IMR-90 (cell line): ENCODE measurements at regions of chr1 and their contacts with region 1.

Region 1: GRCh38 chr1:53754484-53755312 is 15.7 kb upstream of the GLIS1 start:
- DNase-seq: peak; percentile 77
- ATAC-seq: peak; percentile 91
- H3K4me3 ChIP-seq: no peak overlapping the region
- H3K27ac ChIP-seq: no peak overlapping the region
- H3K4me1 ChIP-seq: no peaks in the 10 kb centered on the region
- H3K27me3 ChIP-seq: peaks cover 3% of the 10 kb centered on the region; the same call in 1 of the 2 replicates
- CTCF ChIP-seq: peak; percentile 84
- POLR2A ChIP-seq: no peak
- RAD21 ChIP-seq: peak; percentile 92

Region 2: DNA sequence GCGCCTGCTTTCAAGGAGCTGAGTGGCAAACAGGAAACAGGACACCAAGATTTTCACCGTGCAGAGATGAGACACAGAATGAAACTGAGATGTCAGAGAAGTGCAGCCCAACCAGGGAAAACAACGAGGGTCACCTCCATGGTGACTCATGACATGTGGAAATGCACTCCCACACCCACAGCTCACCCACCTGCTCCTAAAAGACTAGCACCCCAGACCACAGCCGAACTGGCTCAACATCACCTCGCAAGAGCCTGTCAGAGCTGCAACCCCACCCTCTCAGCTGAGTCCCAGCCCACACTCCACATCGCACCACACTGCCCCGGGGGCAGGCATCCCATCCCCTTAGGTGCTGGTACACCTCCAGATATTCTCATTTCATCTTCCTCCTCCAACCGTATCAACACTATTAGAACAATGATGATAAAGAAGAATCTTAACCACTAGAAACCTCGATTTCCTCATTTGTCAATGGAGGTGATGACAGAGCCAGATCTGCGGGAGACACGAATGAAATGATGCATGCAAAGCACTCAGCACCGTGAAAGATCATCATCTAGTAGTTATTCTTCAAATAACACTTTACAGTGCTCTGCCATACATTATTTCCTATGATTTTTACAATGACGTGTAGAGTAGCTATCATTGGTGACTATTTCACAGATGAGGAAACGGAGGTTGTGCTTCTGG is 192.3 kb before region 1 on chr1:
- CTCF ChIA-PET with region 1: no interaction called
- POLR2A ChIA-PET with region 1: no interaction called
- dilution Hi-C with region 1: no loop called
- in situ Hi-C with region 1: no loop called
- intact Hi-C with region 1: loop called (anchors 5 kb)
- DNase-seq: peak; percentile 30
- ATAC-seq: no peak
- H3K4me3 ChIP-seq: no peak overlapping the region
- H3K27ac ChIP-seq: no peak overlapping the region
- H3K4me1 ChIP-seq: peaks cover 6% of the 10 kb centered on the region; the same call in 1 of the 2 replicates
- H3K27me3 ChIP-seq: no peaks in the 10 kb centered on the region
- CTCF ChIP-seq: no peak
- POLR2A ChIP-seq: no peak
- RAD21 ChIP-seq: no peak

Region 3: GRCh38 chr1:53681977-53682685 is 72.6 kb before region 1 on chr1:
- CTCF ChIA-PET with region 1: no interaction called
- POLR2A ChIA-PET with region 1: no interaction called
- dilution Hi-C with region 1: no loop called
- in situ Hi-C with region 1: no loop called
- intact Hi-C with region 1: no loop called
- DNase-seq: peak; percentile 24
- ATAC-seq: no peak
- H3K4me3 ChIP-seq: no peak overlapping the region
- H3K27ac ChIP-seq: no peak overlapping the region
- H3K4me1 ChIP-seq: peaks cover 33% of the 10 kb centered on the region
- H3K27me3 ChIP-seq: no peaks in the 10 kb centered on the region
- CTCF ChIP-seq: peak; percentile 27; the same call in 1 of the 2 replicates
- POLR2A ChIP-seq: no peak
- RAD21 ChIP-seq: peak; percentile 51